Mucosa of descending colon (tissue), 3 donors: ENCODE measurements at regions of chr5 and their contacts with region 1.

Region 1: GRCh38 chr5:137498736-137499505 is at the start of gene SPOCK1:
- DNase-seq: peak; percentile 59 to 81 (median 76)
- ATAC-seq: peak; percentile 98
- H3K4me3 ChIP-seq: no peak within 1 kb of the TSS
- H3K4me1 ChIP-seq: no peaks in the 10 kb centered on the region
- CTCF ChIP-seq: peak; percentile 85
- total RNA-seq, gene SPOCK1: 1.8 to 55.5 (median 7.9) TPM

Region 2: GRCh38 chr5:137320056-137321045 is 178.6 kb before region 1 on chr5:
- intact Hi-C with region 1: loop called in 1 of 2 experiments (anchors 5 kb)
- DNase-seq: peak in 1 of 3 donors; percentile 63
- ATAC-seq: peak; percentile 61
- H3K4me3 ChIP-seq: no peak overlapping the region
- H3K4me1 ChIP-seq: no peaks in the 10 kb centered on the region
- CTCF ChIP-seq: peak; percentile 70

Region 3: DNA sequence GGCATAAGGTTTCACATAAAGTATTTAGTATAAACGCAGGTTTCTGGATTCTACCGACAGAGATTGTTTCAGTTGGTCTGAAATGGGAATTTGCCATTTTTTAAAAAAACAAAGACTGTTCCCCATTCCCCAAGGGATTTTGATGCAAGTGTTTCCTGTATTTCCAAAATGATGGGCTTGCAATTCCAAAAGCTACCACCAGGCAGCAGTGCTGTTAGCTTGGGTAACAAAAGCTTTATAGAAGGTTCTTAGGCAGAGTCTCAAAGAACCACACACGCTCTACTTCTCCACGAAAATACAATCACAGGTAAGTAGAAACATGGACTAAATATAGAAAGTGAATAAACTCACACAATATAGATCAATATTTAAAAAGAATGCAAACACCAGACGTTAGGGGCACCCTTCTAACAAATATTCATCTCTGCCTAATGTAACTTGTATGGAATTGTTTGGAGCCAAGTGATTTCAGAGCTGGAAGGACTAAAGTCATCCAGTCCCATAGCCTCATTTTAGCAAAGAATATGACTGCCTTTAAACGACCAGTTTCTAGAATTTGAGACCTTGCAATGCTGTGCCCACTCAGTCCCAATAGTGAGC is 154.1 kb before region 1 on chr5:
- intact Hi-C with region 1: loop called in 1 of 2 experiments (anchors 5 kb)
- DNase-seq: peak in 1 of 3 donors; percentile 73
- ATAC-seq: no peak
- H3K4me3 ChIP-seq: no peak overlapping the region
- H3K4me1 ChIP-seq: no peaks in the 10 kb centered on the region
- CTCF ChIP-seq: peak; percentile 64